GM10248 (cell line): ENCODE measurements at regions of chr11 and their contacts with region 1.

Region 1: DNA sequence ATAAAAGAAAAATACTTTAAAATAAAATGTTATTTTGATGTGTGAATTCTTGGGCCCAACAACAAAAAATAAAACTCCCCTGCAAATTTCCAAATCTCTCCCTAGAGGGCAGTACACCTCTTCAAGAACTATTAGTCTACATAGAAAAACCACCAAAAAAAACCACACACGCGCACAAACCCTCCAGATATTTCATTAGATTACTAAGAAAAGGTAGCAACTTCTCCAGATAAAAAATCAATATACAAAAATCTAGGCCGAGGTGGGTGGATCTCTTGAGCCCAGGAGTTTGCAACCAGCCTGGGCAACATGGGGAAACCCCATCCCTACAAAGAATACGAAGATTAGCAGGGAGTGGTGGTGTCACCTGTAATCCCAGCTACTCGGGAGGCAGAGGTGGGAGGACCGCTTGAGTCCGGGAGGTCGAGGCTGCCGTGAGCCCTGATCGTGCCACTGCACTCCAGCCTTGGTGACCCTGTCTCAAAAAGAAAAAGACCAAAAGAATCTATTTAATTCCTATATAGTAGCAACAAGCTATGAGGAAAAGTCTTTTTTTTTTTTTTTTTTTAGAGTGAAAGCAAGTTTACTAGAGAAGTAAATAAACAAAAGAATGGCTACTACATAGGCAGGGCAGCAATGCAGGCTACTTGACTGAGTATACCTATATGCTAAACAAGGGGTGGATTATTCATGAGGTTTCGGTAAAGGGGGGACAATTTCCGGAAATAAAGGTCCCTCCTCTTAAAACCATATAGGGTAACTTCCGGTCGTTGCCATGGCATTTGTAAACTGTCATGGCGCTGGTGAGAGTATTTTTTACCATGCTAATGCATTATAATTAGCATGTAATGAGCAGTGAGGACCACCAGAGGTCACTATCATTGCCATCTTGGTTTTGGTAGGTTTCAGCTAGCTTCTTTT is 13.1 kb downstream of the B3GNT6 start:
- DNase-seq: peak; percentile 73
- CTCF ChIP-seq: peak; percentile 66

Region 2: DNA sequence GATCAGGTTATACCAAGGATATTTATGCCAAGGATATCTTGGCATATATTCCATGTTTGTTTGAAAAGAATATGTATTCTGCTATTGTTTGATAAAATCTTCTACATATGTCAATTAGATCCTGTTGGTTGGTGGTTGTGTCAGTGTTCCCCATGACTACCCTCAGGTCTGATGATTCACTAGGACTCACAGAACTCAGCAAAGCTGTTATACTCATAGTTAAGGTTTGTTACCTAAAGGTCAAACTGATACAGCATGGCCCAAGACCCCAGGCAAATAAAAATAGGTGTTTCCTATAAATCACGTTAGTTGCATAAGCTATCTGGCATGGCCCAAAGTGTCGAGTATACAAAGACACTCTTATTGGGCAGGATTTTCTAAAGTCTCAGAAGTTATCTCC is 43.3 kb before region 1 on chr11:
- CTCF ChIA-PET with region 1: no interaction called
- POLR2A ChIA-PET with region 1: no interaction called
- DNase-seq: no peak
- CTCF ChIP-seq: no peak

Region 3: GRCh38 chr11:77066229-77067042 is 19.2 kb after region 1 on chr11 and contains the start of gene CAPN5:
- CTCF ChIA-PET with region 1: interaction called, 14 read pairs
- POLR2A ChIA-PET with region 1: no interaction called
- DNase-seq: peak; percentile 97
- CTCF ChIP-seq: peak; percentile 3

Region 4: GRCh38 chr11:77082838-77083562 is 35.7 kb after region 1 on chr11:
- CTCF ChIA-PET with region 1: interaction called, 85 read pairs
- POLR2A ChIA-PET with region 1: no interaction called
- DNase-seq: no peak
- CTCF ChIP-seq: no peak

Region 5: GRCh38 chr11:77113382-77114088 is 66.3 kb after region 1 on chr11:
- CTCF ChIA-PET with region 1: interaction called, 14 read pairs
- POLR2A ChIA-PET with region 1: interaction called, 5 read pairs
- DNase-seq: peak; percentile 53
- CTCF ChIP-seq: no peak